Cardiac septum (tissue), 1 donor: ENCODE measurements at regions of chrX and their contacts with region 1.

Region 1: DNA sequence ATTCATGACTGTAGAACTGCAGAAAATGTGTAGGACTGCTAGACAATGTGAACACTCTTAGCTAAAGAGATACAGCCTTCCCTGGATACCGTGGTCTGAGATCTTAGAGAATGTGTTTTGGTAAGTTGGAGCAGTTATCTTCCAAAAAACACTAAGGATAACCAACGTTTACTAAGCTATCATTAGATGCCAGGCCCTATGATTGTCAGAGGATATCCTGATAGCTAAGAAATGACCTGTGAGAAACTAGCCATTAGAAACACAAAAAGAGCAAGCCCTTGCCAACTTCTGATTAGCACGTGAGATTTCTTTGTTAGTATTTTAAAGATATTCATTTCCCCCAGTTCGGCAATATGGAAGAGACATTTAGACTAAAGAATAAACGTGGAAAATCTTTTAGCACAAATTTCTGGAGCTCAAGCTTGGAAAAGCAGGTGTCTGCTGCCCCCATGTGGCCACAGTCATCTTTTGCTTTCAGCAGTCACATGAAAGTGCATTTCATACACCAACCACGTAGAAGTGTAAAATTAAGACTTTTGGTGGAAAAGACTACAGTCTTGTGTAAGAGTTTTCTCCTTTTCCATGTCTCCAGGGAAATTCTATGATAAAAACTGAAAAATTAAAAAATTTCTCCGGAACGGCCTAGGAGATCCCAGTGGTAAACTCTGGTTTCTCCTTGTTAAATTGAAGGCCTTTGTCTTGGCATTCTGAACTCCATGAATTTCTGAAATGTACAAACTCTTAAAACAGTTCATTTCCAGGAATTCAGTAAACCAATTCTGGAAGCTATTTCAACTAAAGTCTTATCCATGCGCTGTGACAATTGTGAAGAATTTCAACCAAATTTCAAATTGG is 136.4 kb downstream of the ZNF674 start:
- DNase-seq: no peak

Region 2: GRCh38 chrX:45322382-45322781 is 1086.4 kb before region 1 on chrX:
- intact Hi-C with region 1: loop called (anchors 5 kb)
- DNase-seq: no peak

Region 3: GRCh38 chrX:46366381-46367207 is 42.2 kb before region 1 on chrX:
- intact Hi-C with region 1: no loop called
- DNase-seq: no peak